Colonic mucosa (tissue), 4 donors: ENCODE measurements at regions of chr20 and their contacts with region 1.

Region 1: GRCh38 chr20:46260480-46260879 is 47.8 kb downstream of the CDH22 start:
- DNase-seq: no peak
- H3K4me3 ChIP-seq: no peak overlapping the region
- H3K27ac ChIP-seq: no peak overlapping the region
- H3K4me1 ChIP-seq: no peaks in the 10 kb centered on the region
- H3K27me3 ChIP-seq: no peaks in the 10 kb centered on the region
- CTCF ChIP-seq: no peak

Region 2: DNA sequence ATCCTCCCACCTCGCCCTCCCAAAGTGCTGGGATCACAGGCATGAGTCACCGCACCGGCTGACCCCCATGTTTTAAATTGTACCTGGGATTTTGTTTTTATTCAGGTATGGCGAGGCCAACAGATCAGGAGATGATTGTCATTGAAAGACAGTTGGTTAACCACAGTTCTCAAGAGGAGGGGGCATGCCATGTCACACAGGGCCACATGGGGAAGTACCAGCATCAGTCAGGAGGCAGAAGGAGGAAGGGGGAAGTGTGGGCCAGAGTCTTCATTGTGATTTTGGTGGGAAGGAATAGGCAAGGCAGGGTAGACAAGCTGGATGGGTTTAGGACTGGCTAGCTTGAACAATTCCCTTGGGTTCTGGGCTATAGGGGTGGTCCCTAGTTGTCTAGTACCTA is 261.7 kb before region 1 on chr20:
- intact Hi-C with region 1: loop called (anchors 5 kb)
- DNase-seq: no peak
- H3K4me3 ChIP-seq: no peak overlapping the region
- H3K27ac ChIP-seq: no peak overlapping the region
- H3K4me1 ChIP-seq: no peaks in the 10 kb centered on the region
- H3K27me3 ChIP-seq: no peaks in the 10 kb centered on the region
- CTCF ChIP-seq: no peak

Region 3: DNA sequence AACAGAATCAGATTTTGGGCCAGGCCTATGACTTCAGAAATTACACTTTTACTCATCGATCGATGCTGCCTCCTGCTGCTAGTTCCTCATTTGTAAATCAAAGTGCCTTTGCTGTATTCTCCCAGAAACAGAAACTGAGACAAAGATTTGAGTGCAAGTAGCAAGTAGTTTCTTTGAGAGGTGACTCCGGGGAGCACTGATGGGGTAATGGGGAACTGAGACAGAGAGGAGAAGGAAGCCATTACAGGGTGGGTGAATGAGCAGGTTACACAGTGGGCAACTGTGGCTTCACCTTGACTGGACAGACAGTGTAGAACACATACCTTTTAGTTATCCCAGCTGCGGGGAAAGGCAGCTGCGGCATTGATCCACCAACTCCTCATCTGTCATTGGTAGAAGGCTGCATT is 152.0 kb before region 1 on chr20:
- intact Hi-C with region 1: no loop called
- DNase-seq: no peak
- H3K4me3 ChIP-seq: no peak overlapping the region
- H3K27ac ChIP-seq: no peak overlapping the region
- H3K4me1 ChIP-seq: no peaks in the 10 kb centered on the region
- H3K27me3 ChIP-seq: no peaks in the 10 kb centered on the region
- CTCF ChIP-seq: no peak

Region 4: GRCh38 chr20:46324960-46325703 is 64.7 kb after region 1 on chr20:
- intact Hi-C with region 1: no loop called
- DNase-seq: peak; percentile 23
- H3K4me3 ChIP-seq: no peak overlapping the region
- H3K27ac ChIP-seq: no peak overlapping the region
- H3K4me1 ChIP-seq: no peaks in the 10 kb centered on the region
- H3K27me3 ChIP-seq: peaks cover 6% of the 10 kb centered on the region
- CTCF ChIP-seq: peak; percentile 16

Region 5: GRCh38 chr20:46363800-46364634 is 103.5 kb after region 1 on chr20:
- intact Hi-C with region 1: no loop called
- DNase-seq: peak; percentile 90
- H3K4me3 ChIP-seq: peak overlapping the region; percentile 99
- H3K27ac ChIP-seq: peak overlapping the region; percentile 100
- H3K4me1 ChIP-seq: peaks cover 23% of the 10 kb centered on the region
- H3K27me3 ChIP-seq: no peaks in the 10 kb centered on the region
- CTCF ChIP-seq: no peak